Dorsolateral prefrontal cortex (tissue), 120 donors: ENCODE measurements at regions of chr11 and their contacts with region 1.

Region 1: GRCh38 chr11:62787005-62787759 is at the start of gene TMEM179B:
- DNase-seq: peak; percentile 95 to 100 (median 99)
- H3K4me3 ChIP-seq: peak within 1 kb of the TSS; percentile 64 to 100 (median 94)
- H3K27ac ChIP-seq: peak within 1 kb of the TSS; percentile 52 to 99 (median 97)
- H3K27me3 ChIP-seq: no peaks in the 10 kb centered on the region
- CTCF ChIP-seq: peak in 49 of 56 donors; percentile 11 to 71 (median 46)
- total RNA-seq, gene TMEM179B: 12.2 to 34.2 (median 19.6) TPM

Region 2: GRCh38 chr11:62753736-62754603 is 33.2 kb before region 1 on chr11 and contains the start of gene ZBTB3:
- intact Hi-C with region 1: loop called in 1 of 2 experiments (anchors 2 kb)
- DNase-seq: peak; percentile 91 to 99 (median 99)
- H3K4me3 ChIP-seq: peak within 1 kb of the TSS; percentile 51 to 95 (median 79)
- H3K27ac ChIP-seq: peak within 1 kb of the TSS; percentile 81 to 99 (median 96)
- H3K27me3 ChIP-seq: no peaks in the 10 kb centered on the region
- CTCF ChIP-seq: peak in 9 of 56 donors; percentile 10 to 35 (median 18)
- total RNA-seq, gene ZBTB3: 6.9 to 30.3 (median 15.2) TPM

Region 3: DNA sequence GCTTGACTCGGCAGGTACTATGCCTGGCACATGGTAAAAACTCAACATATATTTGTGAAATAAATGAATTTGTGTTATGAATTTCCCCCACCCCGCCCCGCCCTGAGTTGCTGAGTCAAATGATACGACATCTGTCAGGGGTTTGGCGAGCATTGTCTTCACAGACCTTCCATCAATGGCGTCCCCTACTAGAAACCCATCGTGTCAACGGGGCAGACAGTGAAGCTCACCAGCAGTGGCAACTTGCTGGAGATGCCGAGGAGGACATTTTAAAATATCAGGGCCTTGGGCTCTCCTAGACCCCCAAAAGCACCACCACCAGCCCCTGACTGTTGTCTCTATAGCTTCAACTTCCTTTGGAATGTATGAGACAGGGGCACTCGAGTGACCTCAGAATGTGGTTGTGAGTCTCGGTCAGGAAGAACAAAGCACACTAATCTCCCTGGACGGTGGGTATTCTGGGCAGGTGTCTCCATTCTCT is 18.8 kb after region 1 on chr11:
- intact Hi-C with region 1: loop called in 1 of 2 experiments (anchors 2 kb)
- DNase-seq: no peak
- H3K4me3 ChIP-seq: peak overlapping the region; percentile 66 to 99 (median 90)
- H3K27ac ChIP-seq: peak overlapping the region in 58 of 59 donors; percentile 26 to 97 (median 87)
- H3K27me3 ChIP-seq: no peaks in the 10 kb centered on the region
- CTCF ChIP-seq: no peak

Region 4: DNA sequence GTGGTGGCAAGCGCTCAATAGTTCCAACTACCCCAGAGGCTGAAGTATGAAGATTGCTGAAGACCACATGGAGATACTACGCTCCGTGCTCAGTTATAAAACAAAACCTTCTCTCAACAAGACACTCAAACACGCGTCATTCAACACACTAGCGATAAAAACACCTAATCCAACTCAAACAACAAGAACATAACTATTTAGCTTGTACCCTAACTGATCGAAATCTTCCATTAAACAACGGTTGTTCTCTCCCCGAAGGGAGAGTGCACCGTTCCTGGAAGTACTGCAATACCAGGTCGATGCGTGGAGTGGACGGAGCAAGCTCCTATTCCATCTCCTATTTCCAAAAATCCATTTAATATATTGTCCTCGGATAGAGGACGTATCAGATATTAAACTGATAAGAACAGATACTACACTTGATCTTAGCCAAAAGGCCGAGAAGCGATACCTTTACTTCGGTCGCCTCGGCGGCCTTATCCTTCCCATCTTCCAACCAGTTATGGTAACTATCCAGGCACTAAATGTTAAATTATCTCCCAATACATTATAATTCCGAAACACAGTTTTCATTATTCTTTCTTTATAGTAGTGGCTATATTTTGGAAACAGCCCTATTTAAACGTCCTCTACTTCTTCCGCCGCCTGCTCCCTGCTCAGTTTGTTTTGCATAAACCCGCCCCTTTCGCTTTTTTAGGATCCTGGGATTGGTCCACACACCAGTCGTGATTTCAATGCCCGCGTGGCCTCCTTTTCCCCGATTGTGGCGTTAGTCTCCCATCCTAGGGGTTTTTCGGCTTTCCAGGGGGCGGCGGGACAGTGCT is 54.4 kb after region 1 on chr11:
- intact Hi-C with region 1: loop called in 1 of 2 experiments (anchors 5 kb)
- DNase-seq: peak; percentile 62 to 90 (median 86)
- H3K4me3 ChIP-seq: peak overlapping the region; percentile 65 to 100 (median 95)
- H3K27ac ChIP-seq: peak overlapping the region; percentile 88 to 100 (median 99)
- H3K27me3 ChIP-seq: no peaks in the 10 kb centered on the region
- CTCF ChIP-seq: peak in 4 of 56 donors; percentile 4 to 28 (median 18)

Region 5: DNA sequence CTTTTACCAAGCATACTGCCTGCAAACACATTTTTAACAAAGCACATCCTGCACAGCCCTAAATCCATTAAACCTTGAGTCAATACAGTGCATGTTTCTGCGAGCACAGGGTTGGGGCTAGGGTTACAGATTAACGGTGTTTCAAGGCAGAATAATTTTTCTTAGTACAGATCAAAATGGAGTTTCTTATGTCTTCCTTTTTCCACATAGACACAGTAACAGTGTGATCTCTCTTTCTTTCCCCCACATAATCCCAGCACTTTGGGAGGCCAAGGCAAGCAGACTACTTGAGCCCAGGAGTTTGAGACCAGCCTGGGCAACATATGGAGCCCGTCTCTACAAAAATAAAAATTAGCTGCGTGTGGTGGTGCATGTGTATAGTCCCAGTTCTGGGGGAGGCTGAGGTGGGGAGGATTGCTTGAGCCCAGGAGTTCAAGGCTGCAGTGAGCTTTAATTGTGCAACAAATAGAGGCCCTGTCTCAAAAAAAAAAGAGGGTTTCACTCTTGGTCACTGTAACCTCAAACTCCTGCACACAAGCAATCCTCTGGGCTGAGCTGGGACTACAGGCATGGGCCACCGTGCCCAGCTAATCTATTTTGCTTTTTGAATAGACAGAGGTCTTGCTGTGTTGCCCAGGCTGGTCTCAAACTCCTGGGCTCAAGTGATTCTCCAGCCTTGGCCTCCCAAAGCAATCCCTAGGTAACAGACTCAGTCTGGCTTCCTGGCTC is 73.8 kb after region 1 on chr11:
- intact Hi-C with region 1: loop called (anchors 5 kb)
- DNase-seq: no peak
- H3K4me3 ChIP-seq: no peak overlapping the region
- H3K27ac ChIP-seq: peak overlapping the region in 5 of 59 donors; percentile 2 to 52 (median 35)
- H3K27me3 ChIP-seq: no peaks in the 10 kb centered on the region
- CTCF ChIP-seq: no peak

Region 6: GRCh38 chr11:63783925-63784592 is 996.9 kb after region 1 on chr11:
- intact Hi-C with region 1: no loop called
- DNase-seq: no peak
- H3K4me3 ChIP-seq: no peak overlapping the region
- H3K27ac ChIP-seq: no peak overlapping the region
- H3K27me3 ChIP-seq: no peaks in the 10 kb centered on the region
- CTCF ChIP-seq: no peak